GM12878 (cell line): ENCODE measurements at regions of chr4 and their contacts with region 1.

Region 1: DNA sequence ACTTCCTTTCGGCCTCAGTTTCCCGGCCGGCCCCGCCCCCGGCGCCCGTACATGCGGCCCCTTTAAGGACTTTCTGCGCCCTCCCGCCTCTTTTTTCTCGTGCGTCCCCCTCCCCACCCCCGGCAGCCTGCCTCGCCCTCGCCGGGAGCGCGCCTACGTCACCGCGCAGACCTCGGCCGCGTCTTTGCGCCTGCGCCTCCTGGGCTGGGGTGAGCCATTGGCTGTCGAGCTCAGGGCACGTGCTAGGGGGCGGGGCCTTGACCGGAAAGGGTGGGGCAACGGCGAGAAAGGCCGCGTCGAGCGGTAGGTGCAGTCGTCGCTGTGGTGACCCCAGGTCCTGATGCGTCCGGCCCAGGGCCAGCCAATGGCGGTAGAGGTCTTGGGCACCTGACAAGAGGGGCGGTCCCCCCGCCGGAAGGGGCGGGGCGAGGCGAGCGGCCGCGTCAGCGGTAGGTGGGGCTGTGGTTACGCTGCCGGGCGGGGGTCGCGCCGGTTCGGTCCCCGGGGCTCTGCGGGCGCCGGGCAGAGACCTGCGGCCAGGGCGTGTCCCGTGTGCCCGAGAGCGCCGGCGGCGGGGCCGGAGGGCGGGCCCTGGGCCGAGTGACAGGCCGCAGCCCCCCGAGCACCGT is at the start of gene UVSSA:
- DNase-seq: peak; percentile 97
- ATAC-seq: peak; percentile 94
- H3K4me3 ChIP-seq: peak within 1 kb of the TSS; percentile 81
- H3K27ac ChIP-seq: peak within 1 kb of the TSS; percentile 88
- H3K4me1 ChIP-seq: peaks cover 10% of the 10 kb centered on the region
- H3K27me3 ChIP-seq: no peaks in the 10 kb centered on the region
- CTCF ChIP-seq: no peak
- EP300 ChIP-seq: no peak
- POLR2A ChIP-seq: no peak; the same call in 1 of the 2 replicates
- RAD21 ChIP-seq: no peak
- polyA plus RNA-seq, gene UVSSA: 0.34 to 0.82 TPM

Region 2: DNA sequence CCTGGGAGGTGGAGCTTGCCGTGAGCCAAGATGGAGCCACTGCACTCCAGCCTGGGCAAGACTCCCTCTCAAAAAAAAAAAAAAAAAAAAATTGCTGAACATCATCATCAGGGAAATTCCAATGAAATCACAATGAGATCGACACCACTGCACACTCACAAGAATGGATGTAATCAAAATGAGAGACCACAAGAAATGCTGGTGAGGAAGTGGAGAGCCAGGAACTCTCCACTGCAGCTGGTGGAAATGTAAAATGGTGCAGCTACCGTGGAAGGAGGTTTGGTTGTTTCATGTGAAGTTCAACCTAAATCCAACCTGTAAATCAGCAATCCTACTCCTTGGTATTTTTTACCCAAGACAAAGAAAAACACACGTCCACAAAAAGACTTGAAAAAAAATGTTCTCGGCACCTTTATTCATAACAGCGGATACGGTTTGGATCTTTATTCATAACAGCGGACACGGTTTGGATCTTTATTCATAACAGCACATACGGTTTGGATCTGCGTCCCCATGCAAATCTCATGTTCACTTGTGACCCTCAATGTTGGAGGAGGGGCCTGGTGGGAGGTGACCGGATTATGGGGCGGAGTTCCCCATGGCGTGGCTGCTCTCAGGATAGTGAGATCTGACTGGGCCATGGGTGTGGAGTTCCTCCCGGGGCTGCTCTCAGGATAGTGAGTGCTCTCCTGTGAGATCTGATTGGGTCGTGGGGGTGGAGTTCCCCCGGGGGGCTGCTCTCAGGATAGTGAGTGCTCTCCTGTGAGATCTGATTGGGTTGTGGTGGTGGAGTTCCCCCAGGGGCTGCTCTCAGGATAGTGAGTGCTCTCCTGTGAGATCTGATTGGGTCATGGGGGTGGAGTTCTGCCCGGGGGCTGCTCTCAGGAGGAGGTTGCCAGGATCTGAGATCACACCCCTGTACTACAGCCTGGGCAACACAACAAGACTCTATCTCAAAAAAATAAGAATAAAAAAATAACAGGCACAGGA is 422.5 kb before region 1 on chr4:
- CTCF ChIA-PET with region 1: no interaction called
- POLR2A ChIA-PET with region 1: no interaction called
- RAD21 ChIA-PET with region 1: no interaction called
- SMC1A ChIA-PET with region 1: no interaction called
- in situ Hi-C with region 1: no loop called
- intact Hi-C with region 1: loop called (anchors 5 kb)
- DNase-seq: peak; percentile 50
- ATAC-seq: peak; percentile 74
- H3K4me3 ChIP-seq: no peak overlapping the region; the same call in 1 of the 2 replicates
- H3K27ac ChIP-seq: peak overlapping the region; percentile 79
- H3K4me1 ChIP-seq: peaks cover 45% of the 10 kb centered on the region
- H3K27me3 ChIP-seq: no peaks in the 10 kb centered on the region
- CTCF ChIP-seq: no peak
- EP300 ChIP-seq: no peak
- POLR2A ChIP-seq: no peak
- RAD21 ChIP-seq: no peak

Region 3: DNA sequence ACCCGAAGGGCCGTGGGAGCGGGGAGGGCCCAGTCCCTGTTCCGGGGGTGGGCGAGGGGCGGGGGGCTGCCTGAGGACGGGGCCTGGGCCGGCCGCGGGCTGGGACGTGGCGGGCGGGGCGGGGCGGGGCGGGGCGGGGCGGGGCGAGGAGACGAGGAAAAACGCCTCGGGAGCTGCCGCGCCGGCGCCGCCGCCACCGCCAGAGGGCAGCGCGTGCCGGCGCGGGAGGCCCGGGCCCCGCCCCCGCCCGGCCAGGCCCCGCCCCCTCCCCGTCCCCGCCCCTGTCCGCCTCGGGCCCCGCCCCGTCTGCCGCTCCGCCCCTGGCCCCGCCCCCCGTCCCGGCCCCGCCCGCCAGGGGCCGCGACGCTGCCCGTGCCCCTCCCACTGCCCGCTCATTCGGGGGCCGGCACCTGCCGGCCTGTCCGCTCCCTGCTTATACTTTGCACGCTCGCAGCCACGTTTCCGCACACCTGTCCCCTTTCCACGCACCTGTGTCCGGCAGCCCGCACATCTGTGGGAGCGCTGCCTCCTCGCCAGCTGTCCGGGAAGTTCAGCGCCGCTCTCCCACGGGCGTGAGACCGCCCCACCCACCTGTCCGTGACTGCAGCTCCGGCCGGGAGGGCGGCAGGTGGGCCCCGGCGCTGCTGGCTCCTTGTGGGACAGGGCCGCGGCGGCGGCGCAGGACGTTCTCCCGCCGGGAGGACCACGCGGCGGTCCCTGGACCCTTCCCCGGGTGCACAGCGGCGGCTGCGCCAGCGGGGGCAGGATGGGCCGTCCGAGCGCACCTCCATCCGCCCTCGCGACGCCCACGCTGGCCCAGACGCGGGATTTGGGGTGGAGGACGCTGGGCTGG is 337.1 kb before region 1 on chr4:
- CTCF ChIA-PET with region 1: no interaction called
- POLR2A ChIA-PET with region 1: interaction called, 5 read pairs
- RAD21 ChIA-PET with region 1: no interaction called
- SMC1A ChIA-PET with region 1: no interaction called
- in situ Hi-C with region 1: loop called (anchors 5 kb)
- intact Hi-C with region 1: loop called (anchors 2 kb)
- DNase-seq: no peak
- ATAC-seq: peak; percentile 67
- H3K4me3 ChIP-seq: peak overlapping the region; percentile 75; the same call in 1 of the 2 replicates
- H3K27ac ChIP-seq: no peak overlapping the region
- H3K4me1 ChIP-seq: peaks cover 11% of the 10 kb centered on the region
- H3K27me3 ChIP-seq: peaks cover 0 to 5% of the 10 kb centered on the region in 2 experiments; a peak in 3 of 4 replicates
- CTCF ChIP-seq: peak in 2 of 3 experiments; percentile 18 to 29; a peak in 3 of 6 replicates
- EP300 ChIP-seq: no peak
- POLR2A ChIP-seq: no peak
- RAD21 ChIP-seq: no peak

Region 4: DNA sequence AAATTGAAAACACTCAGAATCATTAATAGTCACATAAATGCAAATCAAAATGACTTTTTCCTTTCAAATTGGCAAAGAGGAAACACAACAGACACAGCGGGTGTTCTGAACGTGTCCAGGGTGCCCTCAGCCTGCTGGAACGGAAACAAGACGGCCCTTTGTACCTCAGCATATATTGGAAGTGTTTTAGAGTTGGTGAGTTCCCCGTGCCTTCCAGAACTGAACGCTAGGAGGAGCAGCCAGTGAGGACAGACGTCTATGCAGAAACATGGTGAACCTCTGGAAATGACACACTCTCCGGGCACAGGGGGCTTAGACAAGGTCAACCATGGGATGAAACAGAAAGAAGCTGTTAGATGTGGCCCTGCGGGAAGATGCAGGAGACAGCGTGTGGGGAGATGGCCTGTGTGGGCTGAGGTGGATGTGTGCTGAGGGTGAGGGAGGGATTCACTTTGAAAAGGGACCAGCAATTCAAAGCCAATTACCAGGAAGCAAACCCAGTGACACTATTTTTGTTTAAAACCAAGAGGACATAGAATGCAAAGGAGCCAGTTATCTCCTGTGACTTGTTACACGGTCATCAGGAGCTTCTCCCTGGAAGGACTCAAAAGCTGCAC is 274.0 kb before region 1 on chr4:
- CTCF ChIA-PET with region 1: no interaction called
- POLR2A ChIA-PET with region 1: no interaction called
- RAD21 ChIA-PET with region 1: no interaction called
- SMC1A ChIA-PET with region 1: no interaction called
- in situ Hi-C with region 1: no loop called
- intact Hi-C with region 1: no loop called
- DNase-seq: no peak
- ATAC-seq: peak; percentile 93
- H3K4me3 ChIP-seq: no peak overlapping the region
- H3K27ac ChIP-seq: no peak overlapping the region
- H3K4me1 ChIP-seq: no peaks in the 10 kb centered on the region
- H3K27me3 ChIP-seq: no peaks in the 10 kb centered on the region
- CTCF ChIP-seq: peak; percentile 63 to 72 (median 69)
- EP300 ChIP-seq: no peak
- POLR2A ChIP-seq: no peak
- RAD21 ChIP-seq: peak; percentile 32; the same call in 1 of the 2 replicates

Region 5: DNA sequence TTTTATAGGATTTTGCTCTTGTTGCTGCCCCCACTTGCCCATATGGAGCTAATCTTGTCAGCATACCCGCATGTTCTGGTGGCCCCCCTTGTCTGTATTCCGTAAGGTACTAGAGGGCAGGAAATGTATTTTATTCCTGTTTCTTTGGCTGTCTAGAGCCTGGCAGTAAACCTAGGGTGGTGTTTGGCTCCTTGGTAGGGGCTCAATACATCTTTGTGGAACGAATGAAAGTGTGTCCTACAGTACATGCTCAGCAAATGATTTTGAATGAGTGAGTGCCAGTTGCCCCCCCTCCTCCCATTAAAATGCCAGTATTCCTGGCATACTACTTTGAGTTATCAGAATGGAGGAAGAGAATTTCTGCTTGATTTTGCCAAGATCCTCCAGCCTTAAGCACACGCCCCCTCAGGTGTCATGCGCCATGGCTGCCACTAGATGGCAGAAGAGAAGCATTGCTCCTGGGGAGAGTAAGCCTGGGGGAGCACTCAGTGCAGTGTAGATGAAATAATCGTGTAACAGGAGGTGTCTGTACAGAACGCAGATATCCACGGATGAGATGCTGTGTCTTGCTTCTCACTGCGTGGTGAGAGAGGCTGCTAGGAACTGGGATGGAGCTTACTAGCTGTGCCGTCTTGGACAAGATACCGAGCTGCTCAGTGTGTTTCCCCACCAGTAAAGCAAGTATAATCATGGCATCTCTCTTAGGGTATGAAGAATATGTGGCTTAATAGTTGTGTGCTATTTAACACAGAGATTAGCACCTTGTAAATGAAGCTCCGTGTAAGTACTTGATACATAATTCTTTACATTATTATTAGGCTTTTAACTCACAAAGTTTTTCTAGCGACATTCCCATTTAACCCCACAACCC is 216.3 kb before region 1 on chr4:
- CTCF ChIA-PET with region 1: interaction called, 48 read pairs
- POLR2A ChIA-PET with region 1: no interaction called
- RAD21 ChIA-PET with region 1: interaction called, 29 read pairs
- SMC1A ChIA-PET with region 1: interaction called, 13 read pairs
- in situ Hi-C with region 1: loop called (anchors 5 kb)
- intact Hi-C with region 1: loop called (anchors 1 kb)
- DNase-seq: peak; percentile 57
- ATAC-seq: peak; percentile 100
- H3K4me3 ChIP-seq: no peak overlapping the region
- H3K27ac ChIP-seq: no peak overlapping the region
- H3K4me1 ChIP-seq: no peaks in the 10 kb centered on the region; the same call in 1 of the 2 replicates
- H3K27me3 ChIP-seq: no peaks in the 10 kb centered on the region
- CTCF ChIP-seq: peak; percentile 99 to 100 (median 99); a peak in 5 of 6 replicates
- EP300 ChIP-seq: no peak
- POLR2A ChIP-seq: no peak
- RAD21 ChIP-seq: peak; percentile 100

Region 6: GRCh38 chr4:1289207-1290164 is 57.4 kb before region 1 on chr4 and contains the start of gene MAEA:
- CTCF ChIA-PET with region 1: interaction called, 9 read pairs
- POLR2A ChIA-PET with region 1: interaction called, 7 read pairs
- RAD21 ChIA-PET with region 1: interaction called, 28 read pairs
- SMC1A ChIA-PET with region 1: interaction called, 15 read pairs
- in situ Hi-C with region 1: loop called (anchors 5 kb)
- intact Hi-C with region 1: loop called (anchors 5 kb)
- DNase-seq: peak; percentile 83
- ATAC-seq: peak; percentile 98
- H3K4me3 ChIP-seq: peak within 1 kb of the TSS; percentile 87
- H3K27ac ChIP-seq: peak within 1 kb of the TSS; percentile 78
- H3K4me1 ChIP-seq: peaks cover 19% of the 10 kb centered on the region
- H3K27me3 ChIP-seq: no peaks in the 10 kb centered on the region
- CTCF ChIP-seq: no peak
- EP300 ChIP-seq: no peak
- POLR2A ChIP-seq: peak; percentile 95
- RAD21 ChIP-seq: no peak
- polyA plus RNA-seq, gene MAEA: 3.6 to 7.5 TPM

Region 7: DNA sequence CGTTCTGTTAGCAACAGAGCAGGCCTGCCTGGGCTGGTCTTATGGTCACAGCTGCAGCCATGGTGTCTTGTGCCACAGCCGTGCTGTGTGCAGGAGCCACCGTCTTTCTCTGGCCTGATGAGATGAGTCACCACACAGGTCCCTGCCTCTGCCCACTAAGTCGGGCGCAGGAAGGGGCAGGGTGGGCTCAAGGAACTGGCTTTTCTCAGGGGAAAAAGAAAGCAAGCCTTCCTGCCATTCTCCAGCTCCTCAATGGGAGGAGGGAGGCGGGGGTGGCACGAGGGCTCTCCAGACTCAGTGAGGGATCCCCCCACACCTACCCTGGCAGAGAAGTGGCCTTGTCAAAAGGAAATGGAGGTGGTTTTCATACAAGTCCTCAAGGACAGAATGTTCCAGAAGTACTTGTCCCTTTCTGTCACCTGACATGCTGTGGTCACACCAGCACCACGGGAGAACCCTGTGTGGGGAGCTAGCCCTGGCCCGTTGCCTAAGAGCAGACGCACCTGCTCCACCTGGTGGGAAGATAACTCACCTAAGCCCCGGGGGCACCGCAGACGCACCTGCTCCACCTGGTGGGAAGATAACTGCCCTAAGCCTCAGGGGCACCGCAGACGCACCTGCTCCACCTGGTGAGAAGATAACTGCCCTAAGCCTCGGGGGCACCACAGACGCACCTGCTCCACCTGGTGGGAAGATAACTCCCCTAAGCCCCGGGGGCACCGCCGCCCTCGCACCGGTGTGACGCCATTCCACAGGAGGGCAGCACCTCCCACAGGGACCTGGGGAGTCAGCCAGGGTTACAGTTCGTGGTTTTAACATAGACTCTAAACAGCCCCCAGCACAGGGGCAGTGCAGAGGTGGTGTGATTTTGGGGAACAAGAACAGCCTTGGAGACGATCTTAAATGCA is 18.6 kb after region 1 on chr4:
- CTCF ChIA-PET with region 1: no interaction called
- POLR2A ChIA-PET with region 1: no interaction called
- RAD21 ChIA-PET with region 1: no interaction called
- SMC1A ChIA-PET with region 1: no interaction called
- in situ Hi-C with region 1: no loop called
- intact Hi-C with region 1: no loop called
- DNase-seq: no peak
- ATAC-seq: no peak; the same call in 2 of the 3 replicates
- H3K4me3 ChIP-seq: no peak overlapping the region
- H3K27ac ChIP-seq: no peak overlapping the region
- H3K4me1 ChIP-seq: no peaks in the 10 kb centered on the region
- H3K27me3 ChIP-seq: no peaks in the 10 kb centered on the region
- CTCF ChIP-seq: peak in 2 of 3 experiments; percentile 7 to 9; a peak in 1 of 6 replicates
- EP300 ChIP-seq: no peak
- POLR2A ChIP-seq: no peak
- RAD21 ChIP-seq: no peak